Ovary (tissue), 10 donors: ENCODE measurements at regions of chrX and their contacts with region 1.

Region 1: DNA sequence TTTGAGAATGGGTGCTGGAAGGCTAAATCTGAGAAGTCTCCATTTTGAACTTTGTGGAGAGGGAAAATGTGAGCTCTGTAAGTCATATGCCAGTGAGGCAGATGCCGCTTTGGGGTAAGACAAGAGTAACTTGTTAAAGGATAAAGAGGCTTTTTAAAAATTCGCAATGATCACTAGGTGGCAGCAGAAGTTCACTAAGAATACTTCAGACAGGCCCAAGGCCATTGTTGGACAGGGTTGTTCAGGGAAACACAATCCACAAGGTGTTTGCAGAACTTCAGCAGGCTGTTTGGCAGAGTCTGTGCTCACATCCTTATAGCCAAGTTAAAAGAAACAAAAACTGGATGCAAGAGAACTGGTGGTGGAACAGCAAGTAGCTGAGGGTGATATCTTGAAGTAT is 13.7 kb upstream of the PIGA start:
- DNase-seq: peak in 3 of 5 donors; percentile 31 to 52 (median 31)
- H3K4me3 ChIP-seq: no peak overlapping the region
- H3K27ac ChIP-seq: no peak overlapping the region
- H3K4me1 ChIP-seq: no peaks in the 10 kb centered on the region
- H3K27me3 ChIP-seq: no peaks in the 10 kb centered on the region
- CTCF ChIP-seq: peak in 2 of 3 donors; percentile 51 to 60
- EP300 ChIP-seq: no peak
- POLR2A ChIP-seq: no peak

Region 2: DNA sequence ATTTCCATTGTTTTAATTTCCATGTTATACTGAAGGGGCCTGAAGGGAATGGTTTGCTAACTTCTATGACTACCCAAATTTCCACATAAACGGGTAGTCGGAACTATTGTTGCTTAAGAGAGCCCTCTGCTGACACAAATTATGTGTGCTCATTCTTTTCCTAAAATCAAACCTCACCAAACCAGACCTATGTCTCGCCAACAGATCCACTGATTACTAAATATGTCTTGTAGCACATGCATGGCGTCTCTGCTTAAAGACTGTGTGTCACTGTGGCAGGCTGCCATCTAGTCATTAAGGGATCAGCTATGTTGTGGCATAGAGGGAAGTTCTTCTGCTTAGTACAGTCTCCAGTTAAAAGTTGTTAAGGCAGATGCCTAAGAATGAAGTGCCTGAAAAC is 119.0 kb after region 1 on chrX:
- intact Hi-C with region 1: loop called (anchors 5 to 10 kb)
- DNase-seq: peak in 1 of 5 donors; percentile 34
- H3K4me3 ChIP-seq: no peak overlapping the region
- H3K27ac ChIP-seq: peak overlapping the region in 1 of 2 donors; percentile 21
- H3K4me1 ChIP-seq: no peaks in the 10 kb centered on the region
- H3K27me3 ChIP-seq: no peaks in the 10 kb centered on the region
- CTCF ChIP-seq: peak in 2 of 3 donors; percentile 46 to 60
- EP300 ChIP-seq: no peak
- POLR2A ChIP-seq: no peak